Motor neuron (in vitro differentiated cells): ENCODE measurements at regions of chr10 and their contacts with region 1.

Region 1: DNA sequence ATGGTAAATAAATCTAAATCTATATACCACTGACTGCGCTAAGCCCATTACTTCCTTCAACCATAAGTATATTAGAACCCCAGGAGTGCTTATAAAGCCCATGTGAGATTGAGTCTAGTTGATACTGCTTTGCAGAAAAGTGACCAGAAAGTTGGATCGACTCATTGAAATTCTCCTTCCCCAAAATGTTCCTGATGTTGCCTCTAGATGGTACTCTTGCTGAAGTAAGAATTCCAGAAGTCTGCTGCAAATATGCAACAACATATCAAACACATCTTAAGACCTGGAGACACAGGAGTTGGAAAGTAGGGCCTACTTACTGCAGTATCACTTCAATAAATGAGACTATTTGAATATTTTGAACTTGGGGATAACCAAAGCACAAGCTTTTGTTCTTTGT is 550.8 kb downstream of the IPMK start:
- ATAC-seq: peak in 1 of 8 experiments; percentile 46
- H3K4me3 ChIP-seq: no peak overlapping the region
- H3K27ac ChIP-seq: no peak overlapping the region
- H3K4me1 ChIP-seq: no peaks in the 10 kb centered on the region

Region 2: GRCh38 chr10:57849691-57850357 is 132.9 kb after region 1 on chr10:
- in situ Hi-C with region 1: loop called in 1 of 9 experiments (anchors 25 kb)
- ATAC-seq: no peak
- H3K4me3 ChIP-seq: no peak overlapping the region
- H3K27ac ChIP-seq: no peak overlapping the region
- H3K4me1 ChIP-seq: peaks cover 0 to 3% of the 10 kb centered on the region in 2 donors